HCT116 (cell line): ENCODE measurements at regions of chr7 and their contacts with region 1.

Region 1: DNA sequence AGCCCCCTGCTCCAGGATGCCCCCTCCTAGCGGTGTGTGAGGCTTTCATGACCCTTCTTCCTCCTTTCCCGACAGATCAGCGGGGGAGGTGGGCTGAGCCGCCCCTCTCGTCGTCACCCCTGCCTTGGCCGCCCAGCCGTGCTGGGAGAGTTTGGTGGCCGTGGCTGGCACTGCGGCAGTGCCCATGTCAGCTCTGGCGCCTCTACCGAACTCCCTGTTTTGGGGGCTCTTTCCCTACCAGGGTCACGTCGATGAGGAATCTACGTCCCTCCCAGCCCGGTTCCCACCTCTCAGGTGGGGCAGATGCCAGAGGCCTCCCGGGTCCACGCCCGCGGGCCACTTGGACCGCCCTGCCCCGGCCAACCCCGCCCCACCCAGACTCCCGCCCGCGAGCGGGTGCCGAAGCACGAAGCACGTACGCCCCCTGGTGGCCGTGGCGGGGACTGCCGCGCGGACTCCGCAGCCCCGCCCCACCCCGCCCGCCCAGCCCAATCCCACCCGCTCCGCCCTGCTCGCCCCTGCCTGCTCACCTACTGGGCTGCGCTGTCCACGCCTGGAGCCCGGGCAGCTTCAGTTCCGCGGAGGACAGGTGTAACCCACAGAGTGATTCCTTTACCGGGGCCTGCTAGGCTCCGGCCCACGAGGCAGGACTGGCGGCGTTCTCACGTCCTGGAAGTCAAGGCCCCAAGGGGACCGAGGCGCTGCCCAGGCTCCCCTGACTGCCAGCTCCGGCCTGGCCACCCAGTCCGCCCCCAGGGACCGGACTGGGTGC is 127.1 kb downstream of the UBE2H start:
- DNase-seq: peak; percentile 62
- ATAC-seq: peak; percentile 72
- H3K4me3 ChIP-seq: peak overlapping the region; percentile 52 to 60
- H3K27ac ChIP-seq: peak overlapping the region; percentile 98
- H3K4me1 ChIP-seq: peaks cover 43 to 59% of the 10 kb centered on the region in 2 experiments
- H3K27me3 ChIP-seq: no peaks in the 10 kb centered on the region
- CTCF ChIP-seq: peak in 2 of 3 experiments; percentile 34 to 44; a peak in 2 of 6 replicates
- POLR2A ChIP-seq: peak; percentile 31
- RAD21 ChIP-seq: no peak

Region 2: GRCh38 chr7:129343099-129343700 is 482.5 kb before region 1 on chr7:
- CTCF ChIA-PET with region 1: interaction called, 4 read pairs
- POLR2A ChIA-PET with region 1: no interaction called
- RAD21 ChIA-PET with region 1: interaction called in 1 of 2 experiments, 3 read pairs
- intact Hi-C with region 1: loop called (anchors 5 kb)
- DNase-seq: peak; percentile 37
- ATAC-seq: peak; percentile 77
- H3K4me3 ChIP-seq: no peak overlapping the region
- H3K27ac ChIP-seq: no peak overlapping the region
- H3K4me1 ChIP-seq: no peaks in the 10 kb centered on the region
- H3K27me3 ChIP-seq: no peaks in the 10 kb centered on the region
- CTCF ChIP-seq: peak; percentile 65 to 75 (median 71)
- POLR2A ChIP-seq: no peak
- RAD21 ChIP-seq: peak; percentile 70

Region 3: GRCh38 chr7:129611246-129612111 is 214.2 kb before region 1 on chr7 and contains the start of gene NRF1:
- CTCF ChIA-PET with region 1: interaction called, 4 read pairs
- POLR2A ChIA-PET with region 1: no interaction called
- RAD21 ChIA-PET with region 1: no interaction called
- intact Hi-C with region 1: loop called (anchors 5 kb)
- DNase-seq: peak; percentile 48
- ATAC-seq: peak; percentile 88
- H3K4me3 ChIP-seq: peak within 1 kb of the TSS; percentile 87 to 96
- H3K27ac ChIP-seq: peak within 1 kb of the TSS; percentile 88
- H3K4me1 ChIP-seq: peaks cover 6 to 24% of the 10 kb centered on the region in 2 experiments; a peak in 3 of 4 replicates
- H3K27me3 ChIP-seq: no peaks in the 10 kb centered on the region
- CTCF ChIP-seq: no peak
- POLR2A ChIP-seq: peak; percentile 82
- RAD21 ChIP-seq: no peak
- total RNA-seq, gene NRF1: 25.9 TPM

Region 4: DNA sequence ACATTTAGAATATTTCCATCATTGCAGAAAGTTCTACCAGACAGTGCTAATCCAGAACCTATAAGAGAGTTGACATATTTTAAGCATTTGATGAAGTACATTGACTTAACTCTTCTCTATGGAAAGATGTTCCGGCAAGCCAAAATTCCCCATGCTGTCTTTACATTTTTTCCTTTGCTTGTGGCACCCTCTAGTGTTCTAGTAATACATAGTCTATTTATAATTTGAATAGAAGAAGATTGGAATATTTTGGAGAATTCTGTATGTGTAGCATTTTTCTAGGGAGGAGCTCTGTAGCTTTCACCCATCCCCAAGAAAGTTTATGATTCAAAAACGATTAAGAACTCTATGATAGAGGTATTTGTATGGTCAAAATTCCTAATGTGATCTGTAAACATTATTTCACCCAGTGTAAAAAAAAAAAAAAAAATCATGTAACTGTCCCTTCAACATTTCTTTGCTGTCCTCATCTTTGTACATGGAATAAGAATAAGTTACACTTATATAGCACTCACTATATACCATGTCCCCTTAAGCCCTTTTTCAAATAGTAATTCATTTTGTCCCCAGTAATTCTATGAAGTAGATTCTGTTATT is 180.9 kb before region 1 on chr7:
- CTCF ChIA-PET with region 1: interaction called, 10 read pairs
- POLR2A ChIA-PET with region 1: interaction called, 3 read pairs
- RAD21 ChIA-PET with region 1: no interaction called
- intact Hi-C with region 1: no loop called
- DNase-seq: peak; percentile 38
- ATAC-seq: peak; percentile 60
- H3K4me3 ChIP-seq: no peak overlapping the region
- H3K27ac ChIP-seq: no peak overlapping the region
- H3K4me1 ChIP-seq: peaks cover 8 to 16% of the 10 kb centered on the region in 2 experiments; a peak in 3 of 4 replicates
- H3K27me3 ChIP-seq: no peaks in the 10 kb centered on the region
- CTCF ChIP-seq: peak; percentile 33 to 64 (median 59)
- POLR2A ChIP-seq: no peak
- RAD21 ChIP-seq: peak; percentile 76

Region 5: DNA sequence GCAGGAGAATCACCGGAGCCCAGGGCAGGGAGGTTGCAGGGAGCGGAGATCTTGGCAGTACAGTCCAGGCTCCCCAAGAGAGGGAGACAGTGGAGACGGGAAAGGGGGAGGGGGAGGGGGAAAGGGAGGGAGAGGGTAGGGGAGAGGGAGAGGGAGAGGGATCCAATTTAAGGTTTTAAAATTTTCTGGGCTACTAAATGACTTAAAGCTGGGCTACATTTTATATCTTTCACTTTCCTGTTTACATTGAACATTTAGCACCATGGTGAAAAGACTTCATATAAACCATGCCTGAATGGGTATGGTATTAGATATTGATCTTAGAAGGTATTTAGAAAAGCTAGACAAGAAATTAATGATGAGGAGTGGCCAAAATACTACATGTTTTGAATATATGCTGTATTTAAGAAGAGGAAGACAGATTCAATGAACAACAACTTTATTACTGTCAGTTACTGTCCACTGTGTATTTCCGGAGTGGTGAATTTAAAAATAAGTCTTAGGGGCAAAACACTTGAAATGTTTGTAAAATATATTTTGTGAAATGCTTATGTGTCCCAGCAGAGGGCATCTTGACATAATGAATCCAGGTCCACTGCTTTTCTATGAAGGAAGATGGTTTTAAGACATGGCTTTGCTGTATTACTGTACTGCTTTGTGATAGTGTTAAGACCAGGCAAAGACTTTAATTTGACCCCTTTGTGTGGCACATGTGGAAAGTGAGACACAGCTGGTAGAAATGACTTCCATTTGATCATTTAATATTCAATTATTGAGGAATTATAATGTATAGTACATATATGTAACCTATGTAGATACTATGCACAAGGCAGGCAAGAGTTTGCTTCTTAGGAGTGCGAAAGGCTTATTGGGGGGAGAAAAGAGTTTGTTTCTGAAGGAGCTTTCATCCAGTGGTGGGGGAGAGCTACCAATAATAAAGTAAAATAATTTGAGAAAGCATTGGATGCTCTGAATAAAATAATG is 161.4 kb before region 1 on chr7:
- CTCF ChIA-PET with region 1: interaction called, 15 read pairs
- POLR2A ChIA-PET with region 1: interaction called, 3 read pairs
- RAD21 ChIA-PET with region 1: interaction called, 4 to 5 read pairs
- intact Hi-C with region 1: loop called (anchors 1 kb)
- DNase-seq: peak; percentile 45
- ATAC-seq: peak; percentile 66
- H3K4me3 ChIP-seq: 0 out of 4 replicates have a peak overlapping the region, but pooled peaks of 1 of the 2 experiments have one; percentile 7
- H3K27ac ChIP-seq: peak overlapping the region; percentile 54
- H3K4me1 ChIP-seq: peaks cover 16 to 30% of the 10 kb centered on the region in 2 experiments
- H3K27me3 ChIP-seq: no peaks in the 10 kb centered on the region
- CTCF ChIP-seq: peak; percentile 43 to 92 (median 66); a peak in 5 of 6 replicates
- POLR2A ChIP-seq: no peak
- RAD21 ChIP-seq: peak; percentile 94

Region 6: DNA sequence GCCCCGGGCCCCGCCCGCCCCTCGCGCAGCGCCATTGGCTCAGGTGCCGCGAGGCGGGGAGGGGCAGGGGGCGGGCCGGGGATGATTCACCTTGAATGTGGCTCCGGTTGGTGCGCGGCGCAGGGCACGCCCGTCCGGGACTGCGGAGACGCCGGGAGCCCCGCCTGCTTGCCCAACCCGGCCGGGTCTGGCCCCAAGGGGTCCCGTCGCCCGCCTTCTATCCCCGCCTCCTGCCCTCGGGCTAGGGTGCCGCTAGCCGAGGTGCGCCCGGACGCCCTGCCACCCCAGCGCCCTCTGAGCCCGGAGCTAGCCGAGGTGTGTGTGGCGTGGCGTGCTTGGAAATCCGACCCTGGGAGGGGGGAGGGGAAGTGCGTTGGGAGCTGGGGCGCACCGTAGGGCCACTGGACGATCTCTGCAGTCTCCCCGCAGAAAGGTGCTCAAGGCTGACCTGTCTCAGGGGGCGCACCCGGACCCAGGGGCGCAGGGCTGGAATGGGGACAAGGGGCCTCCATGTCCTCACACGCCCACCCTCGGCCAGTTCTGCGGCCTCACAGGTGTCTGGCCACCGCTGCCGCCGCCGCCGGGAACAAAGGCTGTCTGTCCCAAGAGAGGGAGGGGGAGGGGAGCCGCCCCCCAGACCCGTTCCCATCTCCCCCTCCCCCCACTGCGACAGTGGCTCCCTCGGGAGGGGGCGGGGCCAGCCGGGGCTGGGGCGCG is 45.3 kb before region 1 on chr7:
- CTCF ChIA-PET with region 1: interaction called, 5 read pairs
- POLR2A ChIA-PET with region 1: interaction called, 4 read pairs
- RAD21 ChIA-PET with region 1: interaction called in 1 of 2 experiments, 5 read pairs
- intact Hi-C with region 1: loop called (anchors 2 kb)
- DNase-seq: peak; percentile 75
- ATAC-seq: peak; percentile 79
- H3K4me3 ChIP-seq: peak overlapping the region; percentile 84 to 87
- H3K27ac ChIP-seq: peak overlapping the region; percentile 94
- H3K4me1 ChIP-seq: peaks cover 20 to 29% of the 10 kb centered on the region in 2 experiments
- H3K27me3 ChIP-seq: no peaks in the 10 kb centered on the region
- CTCF ChIP-seq: no peak
- POLR2A ChIP-seq: no peak
- RAD21 ChIP-seq: no peak

Region 7: GRCh38 chr7:129804890-129805719 is 20.6 kb before region 1 on chr7:
- CTCF ChIA-PET with region 1: no interaction called
- POLR2A ChIA-PET with region 1: no interaction called
- RAD21 ChIA-PET with region 1: no interaction called
- intact Hi-C with region 1: no loop called
- DNase-seq: no peak
- ATAC-seq: 0 out of 2 replicates have a peak, but pooled peaks have one; percentile 20
- H3K4me3 ChIP-seq: no peak overlapping the region
- H3K27ac ChIP-seq: no peak overlapping the region
- H3K4me1 ChIP-seq: no peaks in the 10 kb centered on the region
- H3K27me3 ChIP-seq: no peaks in the 10 kb centered on the region
- CTCF ChIP-seq: no peak
- POLR2A ChIP-seq: no peak
- RAD21 ChIP-seq: no peak

Region 8: GRCh38 chr7:129851174-129851573 is 25.5 kb after region 1 on chr7:
- CTCF ChIA-PET with region 1: no interaction called
- POLR2A ChIA-PET with region 1: no interaction called
- RAD21 ChIA-PET with region 1: no interaction called
- intact Hi-C with region 1: no loop called
- DNase-seq: no peak
- ATAC-seq: no peak
- H3K4me3 ChIP-seq: no peak overlapping the region
- H3K27ac ChIP-seq: peak overlapping the region; percentile 97
- H3K4me1 ChIP-seq: peaks cover 95 to 96% of the 10 kb centered on the region in 2 experiments
- H3K27me3 ChIP-seq: no peaks in the 10 kb centered on the region
- CTCF ChIP-seq: no peak
- POLR2A ChIP-seq: no peak
- RAD21 ChIP-seq: no peak

Region 9: DNA sequence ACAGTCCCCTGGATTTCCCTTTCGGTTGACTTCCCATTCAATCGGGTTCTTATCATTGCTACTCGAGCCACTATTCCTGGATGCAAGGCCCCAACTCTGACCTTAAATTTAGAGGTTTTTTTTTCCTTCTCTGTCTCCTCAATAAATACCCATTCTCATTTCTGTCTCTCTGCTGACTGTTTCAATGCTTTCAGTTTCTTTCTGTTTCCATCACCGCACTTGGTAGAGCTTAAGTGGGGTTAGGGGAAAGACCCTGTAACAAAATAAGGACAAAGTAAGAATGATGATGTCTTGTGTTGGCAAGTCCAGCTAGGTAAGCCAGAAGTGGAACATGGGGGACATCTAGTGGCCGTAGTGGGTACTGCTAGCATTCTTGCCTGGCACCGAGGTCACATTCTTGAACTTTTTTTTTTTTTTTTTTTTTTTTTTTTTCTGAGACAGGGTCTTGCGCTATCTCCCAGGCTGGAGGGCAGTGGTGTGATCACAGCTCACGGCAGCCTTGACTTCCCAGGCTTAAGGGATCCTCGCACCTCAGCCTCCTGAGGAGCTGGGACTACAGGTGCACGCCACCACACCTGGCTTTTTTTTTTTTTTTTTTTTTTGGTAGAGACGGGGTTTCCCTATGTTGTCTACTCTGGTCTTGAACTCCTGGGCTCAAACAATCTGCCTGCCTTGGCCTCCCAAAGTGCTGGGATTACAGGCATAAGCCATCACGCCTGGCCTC is 185.2 kb after region 1 on chr7:
- CTCF ChIA-PET with region 1: interaction called, 44 read pairs
- POLR2A ChIA-PET with region 1: interaction called, 9 read pairs
- RAD21 ChIA-PET with region 1: interaction called, 4 to 7 read pairs
- intact Hi-C with region 1: loop called (anchors 1 kb)
- DNase-seq: peak; percentile 87
- ATAC-seq: peak; percentile 26; the same call in 1 of the 2 replicates
- H3K4me3 ChIP-seq: peak overlapping the region in 1 of 2 experiments; percentile 1; a peak in 1 of 4 replicates
- H3K27ac ChIP-seq: peak overlapping the region; percentile 89
- H3K4me1 ChIP-seq: peaks cover 36 to 45% of the 10 kb centered on the region in 2 experiments
- H3K27me3 ChIP-seq: no peaks in the 10 kb centered on the region
- CTCF ChIP-seq: peak in 2 of 3 experiments; percentile 91 to 96; a peak in 4 of 6 replicates
- POLR2A ChIP-seq: no peak
- RAD21 ChIP-seq: no peak

Region 10: GRCh38 chr7:130379921-130380860 is 554.5 kb after region 1 on chr7 and contains the start of gene CPA1:
- CTCF ChIA-PET with region 1: no interaction called
- POLR2A ChIA-PET with region 1: no interaction called
- RAD21 ChIA-PET with region 1: no interaction called
- intact Hi-C with region 1: no loop called
- DNase-seq: no peak
- ATAC-seq: no peak
- H3K4me3 ChIP-seq: no peak within 1 kb of the TSS
- H3K27ac ChIP-seq: no peak within 1 kb of the TSS
- H3K4me1 ChIP-seq: no peaks in the 10 kb centered on the region
- H3K27me3 ChIP-seq: no peaks in the 10 kb centered on the region
- CTCF ChIP-seq: no peak
- POLR2A ChIP-seq: no peak
- RAD21 ChIP-seq: no peak
- total RNA-seq, gene CPA1: 11.9 TPM